ENCODE measurements at regions of chr11 and their contacts with region 1.

Region 1: GRCh38 chr11:96342961-96343711 is at the start of gene MAML2:
- DNase-seq: peak; percentile 82 to 94 (median 85)
- H3K4me3 ChIP-seq: peak within 1 kb of the TSS; percentile 99
- H3K4me3 Mint-ChIP-seq: peak within 1 kb of the TSS; percentile 90 to 99 (median 96)
- H3K27ac ChIP-seq: peak within 1 kb of the TSS; percentile 46
- H3K27ac Mint-ChIP-seq: peak within 1 kb of the TSS; percentile 87 to 94 (median 92)
- H3K4me1 ChIP-seq: peaks cover 37% of the 10 kb centered on the region
- H3K4me1 Mint-ChIP-seq: peaks cover 40 to 44% (median 40%) of the 10 kb centered on the region in 3 donors
- H3K27me3 ChIP-seq: no peaks in the 10 kb centered on the region
- H3K27me3 Mint-ChIP-seq: no peaks in the 10 kb centered on the region
- total RNA-seq, gene MAML2: 15.6 to 15.9 TPM

Region 2: GRCh38 chr11:95991545-95991944 is 351.6 kb before region 1 on chr11:
- CTCF ChIA-PET with region 1: interaction called, 10 read pairs
- POLR2A ChIA-PET with region 1: no interaction called
- DNase-seq: no peak
- H3K4me3 ChIP-seq: no peak overlapping the region
- H3K4me3 Mint-ChIP-seq: no peak overlapping the region
- H3K27ac ChIP-seq: no peak overlapping the region
- H3K27ac Mint-ChIP-seq: no peak overlapping the region
- H3K4me1 ChIP-seq: no peaks in the 10 kb centered on the region
- H3K4me1 Mint-ChIP-seq: peaks cover 14 to 23% (median 16%) of the 10 kb centered on the region in 3 donors
- H3K27me3 ChIP-seq: no peaks in the 10 kb centered on the region
- H3K27me3 Mint-ChIP-seq: peaks cover 0 to 2% of the 10 kb centered on the region in 2 donors

Region 3: GRCh38 chr11:96062134-96062533 is 281.0 kb before region 1 on chr11:
- CTCF ChIA-PET with region 1: interaction called, 85 read pairs
- POLR2A ChIA-PET with region 1: no interaction called
- DNase-seq: peak in 1 of 5 donors; percentile 27
- H3K4me3 ChIP-seq: no peak overlapping the region
- H3K4me3 Mint-ChIP-seq: no peak overlapping the region
- H3K27ac ChIP-seq: no peak overlapping the region
- H3K27ac Mint-ChIP-seq: peak overlapping the region in 3 of 8 donors; percentile 7 to 35 (median 29)
- H3K4me1 ChIP-seq: peaks cover 18% of the 10 kb centered on the region
- H3K4me1 Mint-ChIP-seq: peaks cover 30 to 59% (median 36%) of the 10 kb centered on the region in 3 donors
- H3K27me3 ChIP-seq: no peaks in the 10 kb centered on the region
- H3K27me3 Mint-ChIP-seq: no peaks in the 10 kb centered on the region

Region 4: DNA sequence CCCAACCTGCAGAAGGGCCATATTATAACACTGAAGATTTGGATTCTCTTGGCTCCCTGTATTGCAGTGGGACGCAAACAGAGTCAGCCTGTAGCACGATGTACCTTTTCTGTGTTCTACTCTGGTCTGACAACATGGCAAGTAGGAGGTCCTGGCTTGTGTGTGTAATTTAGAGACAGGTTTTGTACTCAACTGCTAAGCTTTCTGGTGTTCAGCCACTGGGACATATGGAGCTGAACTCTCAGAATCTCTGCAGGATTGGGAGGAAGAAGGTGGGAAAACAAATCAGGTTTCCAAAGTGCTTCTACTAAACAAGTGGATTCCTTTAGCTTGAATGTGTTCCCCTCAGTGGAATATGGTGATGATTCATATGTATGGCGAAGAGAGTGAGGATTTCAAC is 226.8 kb before region 1 on chr11:
- CTCF ChIA-PET with region 1: interaction called, 21 read pairs
- POLR2A ChIA-PET with region 1: interaction called, 3 read pairs
- DNase-seq: no peak
- H3K4me3 ChIP-seq: no peak overlapping the region
- H3K4me3 Mint-ChIP-seq: no peak overlapping the region
- H3K27ac ChIP-seq: no peak overlapping the region
- H3K27ac Mint-ChIP-seq: peak overlapping the region in 1 of 8 donors; percentile 85
- H3K4me1 ChIP-seq: peaks cover 7% of the 10 kb centered on the region
- H3K4me1 Mint-ChIP-seq: peaks cover 17 to 48% (median 40%) of the 10 kb centered on the region in 3 donors
- H3K27me3 ChIP-seq: no peaks in the 10 kb centered on the region
- H3K27me3 Mint-ChIP-seq: no peaks in the 10 kb centered on the region

Region 5: DNA sequence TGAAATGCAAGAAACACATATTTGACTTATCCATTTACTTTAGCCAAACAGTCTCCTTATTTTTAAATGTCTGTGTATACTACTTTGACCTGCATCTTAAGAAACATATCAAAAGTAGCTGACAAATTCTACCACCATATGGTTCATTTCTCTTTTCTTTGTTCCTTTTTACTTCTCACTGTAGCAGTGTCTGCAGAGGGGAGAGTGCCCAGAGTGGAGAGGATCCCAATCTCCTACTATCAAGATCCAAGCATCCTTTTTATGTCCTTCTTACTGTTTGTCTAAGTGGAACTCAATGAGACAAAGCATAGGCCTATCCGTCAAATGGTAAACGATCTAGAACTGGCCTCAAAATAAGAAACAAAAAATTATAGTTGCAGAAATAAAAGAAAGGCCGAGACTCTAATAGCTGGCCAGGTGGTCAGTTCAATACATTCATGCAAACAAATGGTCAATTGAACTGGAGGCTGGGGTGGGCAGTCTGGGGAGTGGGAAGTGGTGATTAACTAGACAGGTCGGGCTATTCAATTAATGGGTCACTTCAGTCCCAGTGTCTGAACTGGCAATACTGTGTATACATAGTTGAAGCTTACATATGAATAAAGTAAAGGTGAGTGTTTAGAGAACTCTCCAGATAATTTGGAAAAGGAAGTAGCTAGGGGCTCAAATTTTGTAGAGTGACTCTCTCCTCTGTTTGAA is 149.2 kb before region 1 on chr11:
- CTCF ChIA-PET with region 1: interaction called, 17 read pairs
- POLR2A ChIA-PET with region 1: no interaction called
- DNase-seq: no peak
- H3K4me3 ChIP-seq: no peak overlapping the region
- H3K4me3 Mint-ChIP-seq: peak overlapping the region in 5 of 7 donors; percentile 32 to 63 (median 56)
- H3K27ac ChIP-seq: no peak overlapping the region
- H3K27ac Mint-ChIP-seq: peak overlapping the region; percentile 56 to 80 (median 66)
- H3K4me1 ChIP-seq: peaks cover 53% of the 10 kb centered on the region
- H3K4me1 Mint-ChIP-seq: peaks cover 72 to 88% (median 76%) of the 10 kb centered on the region in 3 donors
- H3K27me3 ChIP-seq: no peaks in the 10 kb centered on the region
- H3K27me3 Mint-ChIP-seq: no peaks in the 10 kb centered on the region

Region 6: GRCh38 chr11:96242971-96243647 is 100.0 kb before region 1 on chr11:
- CTCF ChIA-PET with region 1: interaction called, 34 read pairs
- POLR2A ChIA-PET with region 1: interaction called, 9 read pairs
- DNase-seq: peak; percentile 57 to 77 (median 67)
- H3K4me3 ChIP-seq: peak overlapping the region; percentile 40
- H3K4me3 Mint-ChIP-seq: peak overlapping the region; percentile 83 to 97 (median 90)
- H3K27ac ChIP-seq: peak overlapping the region; percentile 68
- H3K27ac Mint-ChIP-seq: peak overlapping the region; percentile 65 to 99 (median 88)
- H3K4me1 ChIP-seq: peaks cover 61% of the 10 kb centered on the region
- H3K4me1 Mint-ChIP-seq: peaks cover 48 to 59% (median 49%) of the 10 kb centered on the region in 3 donors
- H3K27me3 ChIP-seq: no peaks in the 10 kb centered on the region
- H3K27me3 Mint-ChIP-seq: no peaks in the 10 kb centered on the region

Region 7: DNA sequence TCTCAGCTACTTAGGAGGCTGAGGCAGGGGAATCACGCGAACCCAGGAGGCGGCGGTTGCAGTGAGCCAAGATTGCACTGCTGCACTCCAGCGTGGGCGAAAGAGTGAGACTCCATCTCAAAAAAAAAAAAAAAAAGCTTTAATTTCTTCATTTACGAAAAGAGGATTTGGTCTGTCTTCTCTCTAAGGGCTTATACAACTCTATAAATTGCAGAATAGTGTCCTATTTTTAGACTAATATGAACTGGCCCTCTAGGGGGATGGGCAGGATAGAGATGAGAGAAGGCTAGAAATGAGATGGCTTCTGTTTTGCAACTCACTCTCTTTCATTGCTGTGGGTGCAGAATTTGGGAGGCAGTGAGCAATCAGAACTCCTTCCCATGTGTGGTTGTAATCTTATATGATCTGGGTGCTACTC is 11.4 kb before region 1 on chr11:
- CTCF ChIA-PET with region 1: interaction called, 32 read pairs
- POLR2A ChIA-PET with region 1: no interaction called
- DNase-seq: no peak
- H3K4me3 ChIP-seq: no peak overlapping the region
- H3K4me3 Mint-ChIP-seq: peak overlapping the region in 1 of 7 donors; percentile 24
- H3K27ac ChIP-seq: no peak overlapping the region
- H3K27ac Mint-ChIP-seq: no peak overlapping the region
- H3K4me1 ChIP-seq: peaks cover 64% of the 10 kb centered on the region
- H3K4me1 Mint-ChIP-seq: peaks cover 64 to 80% (median 80%) of the 10 kb centered on the region in 3 donors
- H3K27me3 ChIP-seq: no peaks in the 10 kb centered on the region
- H3K27me3 Mint-ChIP-seq: no peaks in the 10 kb centered on the region

Region 8: GRCh38 chr11:96447208-96448110 is 104.3 kb after region 1 on chr11:
- CTCF ChIA-PET with region 1: no interaction called
- POLR2A ChIA-PET with region 1: no interaction called
- DNase-seq: no peak
- H3K4me3 ChIP-seq: no peak overlapping the region
- H3K4me3 Mint-ChIP-seq: no peak overlapping the region
- H3K27ac ChIP-seq: no peak overlapping the region
- H3K27ac Mint-ChIP-seq: no peak overlapping the region
- H3K4me1 ChIP-seq: no peaks in the 10 kb centered on the region
- H3K4me1 Mint-ChIP-seq: no peaks in the 10 kb centered on the region
- H3K27me3 ChIP-seq: no peaks in the 10 kb centered on the region
- H3K27me3 Mint-ChIP-seq: peaks cover 5 to 30% of the 10 kb centered on the region in 2 donors

Measured in CD8-positive, alpha-beta memory T cell (primary cell).